ENCODE measurements at regions of chr12 and their contacts with region 1.

Region 1: GRCh38 chr12:75933101-75933500 is 98.5 kb downstream of the PHLDA1 start:
- DNase-seq: peak; percentile 27
- H3K4me3 ChIP-seq: no peak overlapping the region
- H3K27ac ChIP-seq: no peak overlapping the region
- H3K4me1 ChIP-seq: peaks cover 20% of the 10 kb centered on the region
- H3K27me3 ChIP-seq: peaks cover 13% of the 10 kb centered on the region in 2 experiments
- CTCF ChIP-seq: no peak
- POLR2A ChIP-seq: no peak

Region 2: GRCh38 chr12:75635606-75636410 is 297.3 kb before region 1 on chr12:
- CTCF ChIA-PET with region 1: no interaction called
- POLR2A ChIA-PET with region 1: no interaction called
- dilution Hi-C with region 1: no loop called
- intact Hi-C with region 1: loop called (anchors 5 kb)
- DNase-seq: peak; percentile 74
- H3K4me3 ChIP-seq: no peak overlapping the region
- H3K27ac ChIP-seq: peak overlapping the region; percentile 41
- H3K4me1 ChIP-seq: peaks cover 24% of the 10 kb centered on the region
- H3K27me3 ChIP-seq: no peaks in the 10 kb centered on the region
- CTCF ChIP-seq: no peak
- POLR2A ChIP-seq: no peak

Region 3: DNA sequence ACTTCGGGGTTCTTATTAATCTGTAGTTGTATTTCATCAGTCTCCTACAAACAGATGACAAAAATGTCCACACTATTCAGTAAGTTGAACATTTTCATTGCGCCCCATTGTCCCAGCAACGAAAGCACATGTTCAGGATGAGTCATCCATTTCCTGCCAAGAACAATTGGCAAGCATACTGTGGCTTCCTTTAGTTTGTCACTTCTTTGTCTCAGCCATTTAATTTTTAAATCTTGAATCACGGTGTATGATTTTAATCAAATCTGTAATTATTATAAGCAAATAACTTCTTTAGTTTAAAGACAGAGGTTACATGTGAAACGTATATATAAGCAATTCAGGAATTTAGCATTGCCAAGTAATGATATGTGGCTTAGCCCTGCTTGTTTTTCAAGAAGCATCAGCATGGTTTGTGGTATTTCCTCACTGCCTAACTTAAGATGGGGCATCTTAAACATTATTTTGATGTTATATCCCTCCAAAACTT is 210.3 kb before region 1 on chr12:
- CTCF ChIA-PET with region 1: no interaction called
- POLR2A ChIA-PET with region 1: no interaction called
- dilution Hi-C with region 1: no loop called
- intact Hi-C with region 1: loop called (anchors 1 kb)
- DNase-seq: peak; percentile 95
- H3K4me3 ChIP-seq: no peak overlapping the region
- H3K27ac ChIP-seq: peak overlapping the region; percentile 92
- H3K4me1 ChIP-seq: peaks cover 46% of the 10 kb centered on the region
- H3K27me3 ChIP-seq: no peaks in the 10 kb centered on the region
- CTCF ChIP-seq: no peak
- POLR2A ChIP-seq: no peak

Region 4: GRCh38 chr12:75862692-75863471 is 70.2 kb before region 1 on chr12:
- CTCF ChIA-PET with region 1: interaction called, 3 read pairs
- POLR2A ChIA-PET with region 1: no interaction called
- dilution Hi-C with region 1: no loop called
- intact Hi-C with region 1: loop called (anchors 1 kb)
- DNase-seq: peak; percentile 84
- H3K4me3 ChIP-seq: no peak overlapping the region
- H3K27ac ChIP-seq: peak overlapping the region; percentile 76
- H3K4me1 ChIP-seq: peaks cover 38% of the 10 kb centered on the region
- H3K27me3 ChIP-seq: no peaks in the 10 kb centered on the region
- CTCF ChIP-seq: no peak
- POLR2A ChIP-seq: no peak

Region 5: GRCh38 chr12:76020731-76021672 is 87.9 kb after region 1 on chr12:
- CTCF ChIA-PET with region 1: interaction called, 5 read pairs
- POLR2A ChIA-PET with region 1: no interaction called
- dilution Hi-C with region 1: no loop called
- intact Hi-C with region 1: loop called (anchors 1 kb)
- DNase-seq: peak; percentile 94
- H3K4me3 ChIP-seq: no peak overlapping the region
- H3K27ac ChIP-seq: peak overlapping the region; percentile 82
- H3K4me1 ChIP-seq: peaks cover 35% of the 10 kb centered on the region
- H3K27me3 ChIP-seq: no peaks in the 10 kb centered on the region
- CTCF ChIP-seq: no peak
- POLR2A ChIP-seq: peak; percentile 33